Gastrocnemius medialis (tissue), 4 donors: ENCODE measurements at regions of chr11 and their contacts with region 1.

Region 1: DNA sequence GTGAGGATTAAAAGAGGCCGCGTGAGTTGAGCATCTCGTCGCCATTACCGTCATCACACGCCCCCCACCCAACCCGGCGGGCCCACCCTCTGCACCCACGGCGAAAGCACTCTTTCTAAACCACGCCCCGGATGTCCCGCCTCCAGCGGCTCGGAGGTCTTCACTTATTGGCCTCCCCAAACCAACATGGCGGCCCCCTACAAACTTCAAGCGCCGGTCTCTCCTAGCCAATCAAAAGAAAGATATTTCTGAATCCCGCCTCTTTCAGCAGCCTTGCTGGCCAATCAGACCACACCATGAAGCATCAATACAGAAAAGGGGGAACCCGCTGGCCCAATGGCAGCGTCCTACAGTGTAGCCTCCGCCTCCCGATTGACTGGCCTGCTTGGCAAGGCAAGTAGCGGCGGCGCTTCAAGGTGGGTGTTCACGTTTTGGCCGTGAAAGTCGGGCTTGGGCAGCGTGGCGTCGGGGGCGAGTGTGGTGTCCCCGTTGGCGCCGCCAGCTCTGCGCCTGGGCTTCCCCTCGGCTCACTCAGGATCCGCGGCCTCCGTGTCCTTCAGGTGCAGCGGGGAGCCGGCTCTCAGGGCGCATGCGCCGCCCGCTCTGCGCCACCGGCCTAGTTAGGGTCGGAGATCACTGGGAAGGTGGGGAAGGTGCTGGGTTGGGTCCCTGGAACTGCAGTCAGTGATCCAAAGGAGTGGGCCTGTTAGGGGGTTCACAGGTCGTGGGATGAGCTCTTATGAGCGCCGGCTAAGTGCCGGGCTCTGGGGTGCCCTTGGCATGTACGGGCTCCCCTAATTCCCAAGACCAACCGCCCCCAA is at the start of gene NDUFS8:
- DNase-seq: peak; percentile 96 to 98
- ATAC-seq: peak; percentile 96 to 99
- H3K4me3 ChIP-seq: peak within 1 kb of the TSS; percentile 71 to 93 (median 86)
- H3K27ac ChIP-seq: peak within 1 kb of the TSS; percentile 90 to 97 (median 92)
- H3K4me1 ChIP-seq: peaks cover 27 to 38% of the 10 kb centered on the region in 2 donors
- H3K27me3 ChIP-seq: no peaks in the 10 kb centered on the region
- CTCF ChIP-seq: no peak
- POLR2A ChIP-seq: peak; percentile 49 to 68
- total RNA-seq, gene NDUFS8: 242 to 432 (median 307) TPM

Region 2: GRCh38 chr11:68010090-68011041 is 20.2 kb before region 1 on chr11 and contains the start of gene ALDH3B1:
- in situ Hi-C with region 1: no loop called
- intact Hi-C with region 1: loop called (anchors 1 kb)
- DNase-seq: peak; percentile 71 to 92
- ATAC-seq: peak; percentile 77 to 86
- H3K4me3 ChIP-seq: peak within 1 kb of the TSS; percentile 12 to 39 (median 34)
- H3K27ac ChIP-seq: peak within 1 kb of the TSS; percentile 73 to 79 (median 76)
- H3K4me1 ChIP-seq: peaks cover 7 to 18% of the 10 kb centered on the region in 2 donors
- H3K27me3 ChIP-seq: no peaks in the 10 kb centered on the region
- CTCF ChIP-seq: no peak
- POLR2A ChIP-seq: peak in 1 of 2 donors; percentile 49
- total RNA-seq, gene ALDH3B1: 2.2 to 5.1 (median 3.6) TPM

Region 3: DNA sequence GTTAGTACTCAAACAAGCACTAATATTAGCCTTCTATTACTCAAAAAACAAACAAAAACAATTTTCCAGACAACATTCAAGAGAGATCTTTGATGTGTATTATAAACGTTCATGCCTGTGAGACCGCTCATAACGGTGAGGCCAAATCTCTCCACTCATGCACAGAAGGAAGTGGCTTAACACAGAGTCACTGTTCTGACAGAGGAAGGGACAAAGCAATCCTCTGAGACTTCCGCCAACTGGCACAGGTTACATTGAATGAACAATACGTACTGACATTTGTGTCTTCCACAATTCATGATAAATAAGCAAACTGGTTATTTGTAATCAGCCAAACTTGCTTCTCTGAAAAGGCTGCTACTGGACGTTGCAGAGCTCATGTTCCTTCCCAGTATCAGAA is 60.2 kb after region 1 on chr11:
- in situ Hi-C with region 1: no loop called
- intact Hi-C with region 1: no loop called
- DNase-seq: peak in 1 of 2 donors; percentile 10
- ATAC-seq: peak; percentile 80 to 86
- H3K4me3 ChIP-seq: no peak overlapping the region
- H3K27ac ChIP-seq: peak overlapping the region in 2 of 4 donors; percentile 24 to 68
- H3K4me1 ChIP-seq: peaks cover 9 to 32% of the 10 kb centered on the region in 2 donors
- H3K27me3 ChIP-seq: no peaks in the 10 kb centered on the region
- CTCF ChIP-seq: no peak
- POLR2A ChIP-seq: no peak

Region 4: DNA sequence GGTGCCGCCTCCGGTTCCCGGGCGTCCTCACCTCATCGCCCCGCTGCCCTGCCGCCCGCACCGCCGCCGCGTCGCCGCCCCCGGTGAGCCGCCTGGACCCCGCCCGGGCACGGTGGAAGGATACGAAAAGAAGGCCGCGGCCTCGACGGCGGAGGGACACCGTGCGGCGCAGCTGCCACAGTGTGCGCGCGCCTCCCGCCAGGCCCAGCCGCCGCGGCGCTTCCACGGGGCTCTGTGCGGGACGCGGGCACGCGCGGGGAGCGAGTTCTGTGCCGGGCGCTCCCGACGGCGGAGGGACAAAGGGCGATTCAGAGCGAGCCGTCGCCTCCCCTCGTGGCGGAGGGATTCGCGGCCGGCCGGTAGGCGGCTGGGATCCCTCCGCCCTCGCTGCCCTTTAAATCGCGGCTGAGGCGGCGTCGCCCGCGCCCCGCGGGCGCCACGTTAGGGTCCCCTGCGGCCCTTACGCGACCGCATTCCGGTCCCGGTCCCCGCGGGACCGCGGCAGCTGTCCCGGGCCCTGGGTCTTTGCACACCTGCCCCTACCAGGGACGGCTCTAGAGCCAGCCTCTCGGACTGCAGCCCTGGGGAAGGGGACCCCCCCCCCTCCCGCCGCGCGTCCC is 183.1 kb after region 1 on chr11:
- in situ Hi-C with region 1: no loop called
- intact Hi-C with region 1: loop called (anchors 2 kb)
- DNase-seq: peak; percentile 81 to 87
- ATAC-seq: peak; percentile 33 to 37
- H3K4me3 ChIP-seq: peak overlapping the region; percentile 69 to 99 (median 91)
- H3K27ac ChIP-seq: peak overlapping the region; percentile 89 to 100 (median 96)
- H3K4me1 ChIP-seq: peaks cover 41 to 42% of the 10 kb centered on the region in 2 donors
- H3K27me3 ChIP-seq: no peaks in the 10 kb centered on the region
- CTCF ChIP-seq: peak in 4 of 5 experiments; percentile 12 to 68 (median 38)
- POLR2A ChIP-seq: peak; percentile 79 to 90

Region 5: DNA sequence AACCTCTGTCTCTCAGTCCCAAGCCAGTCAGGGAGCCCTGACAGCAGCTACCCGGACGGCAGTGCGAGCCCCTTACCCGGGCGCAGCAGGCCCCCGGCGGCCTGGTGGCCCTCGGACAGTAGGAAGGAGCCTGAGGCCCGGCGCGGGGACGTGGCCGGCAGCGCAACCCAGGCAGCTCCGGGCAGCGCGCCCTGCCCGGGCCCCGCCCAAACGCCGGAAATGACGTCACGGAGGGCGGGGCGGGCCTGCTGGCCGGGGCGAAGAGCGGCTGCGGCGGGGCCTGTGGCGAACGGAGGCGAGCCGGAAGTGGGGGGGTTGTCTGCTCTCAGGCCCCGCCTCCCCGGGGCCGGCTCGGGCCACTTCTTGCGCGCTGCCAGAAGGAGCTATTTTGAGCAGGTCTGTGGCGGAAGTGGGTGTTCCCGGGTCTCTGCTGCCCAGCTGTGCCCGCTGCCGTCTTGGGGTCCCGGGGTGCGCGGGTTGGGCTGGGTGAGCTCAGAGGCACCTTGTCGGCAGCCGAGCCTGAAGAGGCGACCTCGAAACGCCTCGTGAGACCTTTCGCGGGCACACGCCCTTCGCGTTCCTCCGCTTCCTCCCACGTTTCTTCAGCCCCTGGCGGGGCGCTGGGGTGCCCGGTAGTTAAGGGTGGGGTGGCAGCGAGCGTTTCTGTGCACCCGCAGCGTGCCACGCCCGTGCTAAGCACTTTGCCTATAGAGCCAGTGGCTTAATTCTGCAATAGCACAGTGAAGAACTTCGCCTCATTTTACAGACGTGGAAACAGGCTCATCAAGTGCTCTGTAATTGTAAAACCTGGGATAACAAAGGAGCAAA is 241.5 kb after region 1 on chr11 and contains the start of gene C11orf24:
- in situ Hi-C with region 1: no loop called
- intact Hi-C with region 1: loop called (anchors 5 kb)
- DNase-seq: peak; percentile 92 to 94
- ATAC-seq: peak; percentile 92 to 94
- H3K4me3 ChIP-seq: peak within 1 kb of the TSS; percentile 66 to 89 (median 75)
- H3K27ac ChIP-seq: peak within 1 kb of the TSS; percentile 88 to 97 (median 92)
- H3K4me1 ChIP-seq: peaks cover 21 to 31% of the 10 kb centered on the region in 2 donors
- H3K27me3 ChIP-seq: no peaks in the 10 kb centered on the region
- CTCF ChIP-seq: peak in 1 of 5 experiments; percentile 7
- POLR2A ChIP-seq: peak; percentile 77 to 80
- total RNA-seq, gene C11orf24: 8.1 to 19.3 (median 10.6) TPM